ENCODE measurements at regions of chr6 and their contacts with region 1.

Region 1: GRCh38 chr6:13614926-13615798 is at the start of gene NOL7:
- DNase-seq: peak; percentile 98
- H3K4me3 Mint-ChIP-seq: peak within 1 kb of the TSS; percentile 99
- H3K27ac Mint-ChIP-seq: peak within 1 kb of the TSS; percentile 93
- H3K4me1 Mint-ChIP-seq: peaks cover 66% of the 10 kb centered on the region
- H3K27me3 Mint-ChIP-seq: no peaks in the 10 kb centered on the region
- total RNA-seq, gene NOL7: 54.0 to 57.8 TPM

Region 2: DNA sequence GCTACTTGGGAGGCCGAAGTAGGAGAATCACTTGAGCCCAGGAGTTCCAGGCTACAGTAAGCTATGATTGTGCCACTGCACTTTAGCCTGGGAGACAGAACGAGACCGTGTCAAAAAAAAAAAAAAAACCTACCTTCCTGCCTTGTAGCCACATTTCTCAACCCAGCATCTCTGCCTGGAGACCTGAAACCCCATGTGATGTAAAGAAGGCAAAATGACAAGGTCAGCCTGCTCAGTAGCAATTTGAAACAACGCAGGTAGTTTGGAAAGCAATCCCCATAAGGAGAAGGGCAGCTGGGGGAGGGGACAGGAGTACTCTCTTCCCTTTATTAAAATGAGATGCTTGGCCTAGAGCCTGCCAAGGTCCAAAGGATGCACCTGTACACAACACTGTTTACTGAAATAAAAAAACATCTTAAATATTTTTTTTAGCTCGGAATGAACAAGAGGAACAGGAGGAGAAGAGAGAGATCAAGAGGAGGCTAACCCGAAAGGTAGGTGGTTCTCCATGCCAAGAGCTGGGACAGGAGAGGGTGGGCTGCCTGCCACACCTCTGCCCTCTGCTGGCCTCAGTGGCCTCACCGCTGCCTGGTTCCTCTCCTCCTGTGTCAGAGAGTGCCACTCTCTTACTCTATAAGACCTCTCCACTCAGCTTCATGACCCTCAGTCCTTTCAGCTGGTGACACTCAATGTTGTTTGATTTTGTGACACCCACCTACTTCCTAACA is 337.2 kb before region 1 on chr6:
- CTCF ChIA-PET with region 1: no interaction called
- POLR2A ChIA-PET with region 1: no interaction called
- DNase-seq: no peak
- H3K4me3 Mint-ChIP-seq: no peak overlapping the region
- H3K27ac Mint-ChIP-seq: no peak overlapping the region
- H3K4me1 Mint-ChIP-seq: peaks cover 25% of the 10 kb centered on the region
- H3K27me3 Mint-ChIP-seq: no peaks in the 10 kb centered on the region

Region 3: DNA sequence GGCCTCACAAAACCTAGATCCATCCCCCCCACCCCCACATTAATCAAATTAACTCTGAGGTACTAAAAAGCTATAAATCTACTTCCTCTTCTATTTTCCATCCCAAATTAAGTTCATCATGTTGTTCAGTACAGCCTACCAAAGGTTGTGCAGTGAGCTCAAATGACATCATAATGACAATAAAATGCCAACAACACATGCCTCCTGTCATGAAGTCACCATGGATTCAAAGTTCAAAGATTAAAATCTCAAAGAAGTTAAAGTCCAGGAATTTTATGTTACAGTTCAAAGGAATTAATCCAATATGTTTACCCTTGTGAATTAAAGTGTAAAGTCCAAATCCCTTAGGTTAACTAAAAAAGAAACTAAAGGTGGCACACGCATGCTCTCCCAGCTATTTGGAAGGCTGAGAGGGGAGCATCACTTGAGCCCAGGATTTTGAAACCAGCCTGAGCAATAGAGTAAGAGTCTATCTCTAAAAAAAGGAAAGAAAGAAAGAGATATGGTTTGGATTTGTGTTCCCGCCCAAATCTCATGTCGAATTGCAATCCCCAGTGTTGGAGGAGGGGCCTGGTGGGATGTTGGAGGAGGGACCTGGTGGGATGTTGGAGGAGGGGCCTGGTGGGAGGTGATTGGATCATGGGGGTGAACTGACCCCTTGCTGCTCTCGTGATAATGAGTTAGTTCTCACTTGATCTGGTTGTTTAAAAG is 66.5 kb before region 1 on chr6:
- CTCF ChIA-PET with region 1: no interaction called
- POLR2A ChIA-PET with region 1: no interaction called
- DNase-seq: no peak
- H3K4me3 Mint-ChIP-seq: no peak overlapping the region
- H3K27ac Mint-ChIP-seq: no peak overlapping the region
- H3K4me1 Mint-ChIP-seq: no peaks in the 10 kb centered on the region
- H3K27me3 Mint-ChIP-seq: peaks cover 7% of the 10 kb centered on the region

Region 4: DNA sequence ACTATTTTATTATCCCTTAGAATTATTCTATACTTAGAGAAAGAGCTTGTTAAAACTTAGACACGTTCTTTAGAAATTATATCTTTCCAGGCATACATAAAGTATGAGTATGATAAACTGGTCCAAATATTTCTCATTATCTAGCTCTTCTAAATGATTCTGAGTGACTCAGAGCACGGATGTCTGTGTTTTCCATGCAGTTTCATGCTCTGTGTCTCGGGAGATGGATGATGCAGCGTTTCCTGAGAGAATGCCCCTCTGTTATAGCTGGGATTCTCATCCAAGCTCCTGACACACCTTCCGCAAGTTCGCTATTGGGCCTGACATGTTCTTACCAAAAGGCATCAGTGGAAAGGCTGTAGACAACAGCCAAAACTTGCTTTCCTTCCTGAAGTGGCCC is 21.4 kb before region 1 on chr6:
- CTCF ChIA-PET with region 1: interaction called, 7 read pairs
- POLR2A ChIA-PET with region 1: interaction called, 10 read pairs
- DNase-seq: no peak
- H3K4me3 Mint-ChIP-seq: no peak overlapping the region
- H3K27ac Mint-ChIP-seq: no peak overlapping the region
- H3K4me1 Mint-ChIP-seq: peaks cover 18% of the 10 kb centered on the region
- H3K27me3 Mint-ChIP-seq: no peaks in the 10 kb centered on the region

Region 5: GRCh38 chr6:13635948-13636658 is 20.9 kb after region 1 on chr6:
- CTCF ChIA-PET with region 1: interaction called, 12 read pairs
- POLR2A ChIA-PET with region 1: interaction called, 24 read pairs
- DNase-seq: no peak
- H3K4me3 Mint-ChIP-seq: peak overlapping the region; percentile 2
- H3K27ac Mint-ChIP-seq: peak overlapping the region; percentile 76
- H3K4me1 Mint-ChIP-seq: peaks cover 27% of the 10 kb centered on the region
- H3K27me3 Mint-ChIP-seq: no peaks in the 10 kb centered on the region

Region 6: GRCh38 chr6:13696226-13696625 is 81.1 kb after region 1 on chr6:
- CTCF ChIA-PET with region 1: interaction called, 7 read pairs
- POLR2A ChIA-PET with region 1: interaction called, 27 read pairs
- DNase-seq: no peak
- H3K4me3 Mint-ChIP-seq: no peak overlapping the region
- H3K27ac Mint-ChIP-seq: no peak overlapping the region
- H3K4me1 Mint-ChIP-seq: peaks cover 52% of the 10 kb centered on the region
- H3K27me3 Mint-ChIP-seq: no peaks in the 10 kb centered on the region

Region 7: DNA sequence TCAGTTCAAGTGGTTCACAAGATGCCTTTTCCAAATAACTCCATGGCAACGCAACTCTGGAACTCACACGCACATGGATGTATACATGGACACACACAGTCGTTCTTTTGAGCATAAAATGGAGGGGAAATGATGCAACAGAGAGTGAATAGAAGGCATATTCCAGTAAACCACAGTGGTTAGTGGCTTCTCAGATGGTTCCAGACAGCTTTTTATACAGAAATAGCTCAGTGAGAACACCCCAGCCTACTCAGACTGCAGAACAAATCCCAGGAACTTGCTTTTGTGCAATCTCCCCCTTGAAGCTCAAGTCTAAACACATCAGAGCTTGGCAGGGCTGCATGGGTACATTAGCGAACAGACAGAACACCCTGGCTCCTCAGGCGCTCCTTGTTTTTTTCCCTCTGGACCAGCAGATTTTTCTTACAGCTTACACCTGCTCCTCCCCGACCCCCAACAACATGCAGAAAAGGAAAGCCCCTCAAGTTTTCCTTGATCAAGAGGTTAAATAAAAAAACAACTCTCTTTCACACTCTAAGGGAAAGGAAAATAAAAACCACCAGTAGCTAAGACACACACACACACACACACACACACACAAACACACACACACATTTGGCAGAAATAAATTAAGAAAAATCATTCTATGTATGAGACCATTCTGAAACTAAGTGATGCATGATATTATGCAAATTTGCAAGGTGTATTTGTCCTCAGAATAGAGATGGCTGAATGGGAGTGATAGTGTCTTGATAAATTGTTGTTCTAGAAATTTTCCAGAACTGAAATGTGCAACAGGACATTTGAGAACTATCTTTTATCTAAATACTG is 147.7 kb after region 1 on chr6:
- CTCF ChIA-PET with region 1: interaction called, 11 read pairs
- POLR2A ChIA-PET with region 1: no interaction called
- DNase-seq: peak; percentile 34
- H3K4me3 Mint-ChIP-seq: peak overlapping the region; percentile 54
- H3K27ac Mint-ChIP-seq: peak overlapping the region; percentile 76
- H3K4me1 Mint-ChIP-seq: peaks cover 57% of the 10 kb centered on the region
- H3K27me3 Mint-ChIP-seq: no peaks in the 10 kb centered on the region

Region 8: DNA sequence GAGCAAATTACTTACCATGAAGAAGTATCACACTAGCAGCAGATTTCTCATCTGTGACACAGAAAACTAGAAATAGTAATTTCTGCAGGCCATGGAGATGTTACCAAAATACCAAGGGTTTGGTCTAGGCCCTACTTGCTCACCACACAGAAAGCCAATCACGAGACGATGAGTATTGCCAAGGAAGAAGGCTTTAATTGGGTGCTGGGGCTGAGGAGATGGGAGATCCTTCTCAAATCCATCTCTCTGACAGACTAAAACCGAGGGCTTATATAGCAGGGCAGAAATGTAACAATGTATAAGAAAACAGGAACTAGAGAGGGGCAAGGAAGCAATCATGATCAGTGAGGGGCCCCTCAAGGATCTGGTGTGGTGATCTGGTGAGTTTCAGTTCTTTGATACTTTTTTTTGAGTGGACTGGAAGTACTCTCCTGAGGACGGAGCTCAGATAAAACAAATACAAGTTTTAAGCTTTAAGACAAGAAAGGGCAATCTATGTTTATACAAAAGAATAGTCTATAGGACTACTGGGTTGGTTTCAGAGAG is 350.5 kb after region 1 on chr6:
- CTCF ChIA-PET with region 1: no interaction called
- POLR2A ChIA-PET with region 1: no interaction called
- DNase-seq: no peak
- H3K4me3 Mint-ChIP-seq: no peak overlapping the region
- H3K27ac Mint-ChIP-seq: no peak overlapping the region
- H3K4me1 Mint-ChIP-seq: no peaks in the 10 kb centered on the region
- H3K27me3 Mint-ChIP-seq: peaks cover 33% of the 10 kb centered on the region

Measured in activated CD4-positive, alpha-beta memory T cell treated with anti-CD3 and anti-CD28 coated beads, Interleukin-2, amount 10 ng/mL, durations not matched to agents 7 days and 5 days (primary cell).